ENCODE measurements at regions of chr15 and their contacts with region 1.

Region 1: DNA sequence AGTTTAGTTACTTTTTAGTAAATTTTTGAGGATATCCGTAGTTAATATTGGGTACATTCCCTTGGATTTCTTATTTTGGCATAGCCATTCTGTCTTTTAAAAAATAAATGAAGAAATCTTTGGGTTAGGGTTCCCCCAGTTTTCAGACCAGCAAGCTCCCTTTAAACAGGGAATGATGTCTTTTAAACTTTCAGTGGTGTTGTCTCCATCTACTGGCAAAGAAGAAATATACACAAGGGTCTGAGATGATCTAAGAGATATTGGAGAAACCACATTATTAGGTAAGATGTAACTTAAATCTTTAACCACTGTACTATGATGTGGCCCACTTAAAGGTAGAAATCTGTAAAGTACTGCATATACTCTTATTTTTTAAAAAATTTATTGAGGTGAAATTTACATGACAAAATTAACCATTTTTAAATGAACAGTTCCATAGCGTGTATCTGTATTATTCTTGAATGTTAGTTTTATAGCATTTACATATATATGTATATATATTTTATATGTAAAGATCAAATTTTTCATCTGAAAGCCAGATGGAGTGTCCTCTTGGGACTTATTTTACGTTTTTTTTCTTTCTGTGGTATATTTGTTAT is 35.1 kb upstream of the EIF3J start:
- DNase-seq: peak; percentile 32
- H3K4me3 ChIP-seq: no peak overlapping the region
- H3K27ac ChIP-seq: no peak overlapping the region
- H3K4me1 ChIP-seq: no peaks in the 10 kb centered on the region
- H3K27me3 ChIP-seq: no peaks in the 10 kb centered on the region
- CTCF ChIP-seq: peak; percentile 54 to 63

Region 2: DNA sequence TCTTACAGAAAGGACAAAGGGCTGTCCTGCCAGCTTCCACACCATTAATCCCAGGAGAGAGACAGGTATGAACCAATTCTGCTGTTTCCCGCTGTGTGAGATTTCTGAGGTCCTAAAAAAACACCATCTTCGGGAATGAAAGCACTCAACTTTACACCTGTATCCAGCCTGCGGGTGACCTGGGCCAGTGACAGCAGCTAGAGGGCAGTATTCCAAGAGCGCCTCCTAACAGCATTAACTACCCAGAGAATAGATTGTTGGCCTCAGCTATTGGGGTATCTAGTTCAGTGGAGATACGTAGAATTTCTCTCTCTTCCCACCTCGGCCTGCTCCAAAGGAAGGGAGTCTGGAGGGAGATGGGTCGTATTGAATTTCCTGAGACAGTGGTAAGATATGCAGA is 619.9 kb before region 1 on chr15:
- CTCF ChIA-PET with region 1: no interaction called
- dilution Hi-C with region 1: no loop called
- in situ Hi-C with region 1: loop called in 1 of 2 experiments (anchors 25 kb)
- intact Hi-C with region 1: no loop called
- DNase-seq: no peak
- H3K4me3 ChIP-seq: no peak overlapping the region
- H3K27ac ChIP-seq: no peak overlapping the region
- H3K4me1 ChIP-seq: no peaks in the 10 kb centered on the region
- H3K27me3 ChIP-seq: no peaks in the 10 kb centered on the region
- CTCF ChIP-seq: peak; percentile 30 to 55

Region 3: GRCh38 chr15:44137750-44138149 is 364.1 kb before region 1 on chr15:
- CTCF ChIA-PET with region 1: no interaction called
- dilution Hi-C with region 1: no loop called
- in situ Hi-C with region 1: no loop called
- intact Hi-C with region 1: loop called (anchors 10 kb)
- DNase-seq: peak; percentile 19
- H3K4me3 ChIP-seq: no peak overlapping the region
- H3K27ac ChIP-seq: no peak overlapping the region
- H3K4me1 ChIP-seq: peaks cover 10% of the 10 kb centered on the region
- H3K27me3 ChIP-seq: no peaks in the 10 kb centered on the region
- CTCF ChIP-seq: no peak

Region 4: DNA sequence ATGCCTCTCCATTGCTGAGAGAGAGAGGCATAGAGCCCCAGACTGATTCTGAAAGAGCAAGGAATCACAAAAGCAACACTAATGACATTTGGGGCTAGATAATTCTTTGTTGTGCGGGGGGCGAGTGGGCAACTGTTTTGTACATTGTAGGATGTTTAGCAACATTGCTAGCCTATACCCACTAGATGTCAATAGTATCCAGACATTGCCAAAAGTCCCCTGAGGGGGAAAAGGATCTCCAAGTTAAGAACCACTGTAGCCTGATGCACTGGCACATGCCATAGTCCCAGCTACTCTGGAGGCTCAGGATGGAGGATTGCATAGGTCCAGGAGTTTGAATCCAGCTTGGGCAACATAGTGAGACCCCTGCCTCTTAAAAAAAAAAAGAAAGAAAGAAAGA is 236.1 kb before region 1 on chr15:
- CTCF ChIA-PET with region 1: no interaction called
- dilution Hi-C with region 1: no loop called
- in situ Hi-C with region 1: no loop called
- intact Hi-C with region 1: loop called (anchors 1 kb)
- DNase-seq: no peak
- H3K4me3 ChIP-seq: no peak overlapping the region
- H3K27ac ChIP-seq: no peak overlapping the region
- H3K4me1 ChIP-seq: no peaks in the 10 kb centered on the region
- H3K27me3 ChIP-seq: no peaks in the 10 kb centered on the region
- CTCF ChIP-seq: peak in 1 of 2 donors; percentile 12

Region 5: GRCh38 chr15:44286814-44287452 is 214.9 kb before region 1 on chr15:
- CTCF ChIA-PET with region 1: no interaction called
- dilution Hi-C with region 1: no loop called
- in situ Hi-C with region 1: no loop called
- intact Hi-C with region 1: loop called (anchors 1 kb)
- DNase-seq: peak; percentile 9
- H3K4me3 ChIP-seq: peak overlapping the region in 2 of 3 experiments; percentile 81 to 90
- H3K27ac ChIP-seq: peak overlapping the region; percentile 97
- H3K4me1 ChIP-seq: peaks cover 4% of the 10 kb centered on the region
- H3K27me3 ChIP-seq: no peaks in the 10 kb centered on the region
- CTCF ChIP-seq: peak; percentile 4 to 17

Region 6: GRCh38 chr15:44426975-44427755 is 74.7 kb before region 1 on chr15 and contains the start of gene CTDSPL2:
- CTCF ChIA-PET with region 1: interaction called, 3 read pairs
- dilution Hi-C with region 1: loop called (anchors 10 kb)
- in situ Hi-C with region 1: no loop called
- intact Hi-C with region 1: loop called (anchors 1 kb)
- DNase-seq: peak; percentile 98
- H3K4me3 ChIP-seq: peak within 1 kb of the TSS; percentile 75 to 94 (median 88)
- H3K27ac ChIP-seq: peak within 1 kb of the TSS; percentile 98
- H3K4me1 ChIP-seq: no peaks in the 10 kb centered on the region
- H3K27me3 ChIP-seq: no peaks in the 10 kb centered on the region
- CTCF ChIP-seq: peak in 1 of 2 donors; percentile 44
- total RNA-seq, gene CTDSPL2: 38.0 to 47.3 TPM

Region 7: DNA sequence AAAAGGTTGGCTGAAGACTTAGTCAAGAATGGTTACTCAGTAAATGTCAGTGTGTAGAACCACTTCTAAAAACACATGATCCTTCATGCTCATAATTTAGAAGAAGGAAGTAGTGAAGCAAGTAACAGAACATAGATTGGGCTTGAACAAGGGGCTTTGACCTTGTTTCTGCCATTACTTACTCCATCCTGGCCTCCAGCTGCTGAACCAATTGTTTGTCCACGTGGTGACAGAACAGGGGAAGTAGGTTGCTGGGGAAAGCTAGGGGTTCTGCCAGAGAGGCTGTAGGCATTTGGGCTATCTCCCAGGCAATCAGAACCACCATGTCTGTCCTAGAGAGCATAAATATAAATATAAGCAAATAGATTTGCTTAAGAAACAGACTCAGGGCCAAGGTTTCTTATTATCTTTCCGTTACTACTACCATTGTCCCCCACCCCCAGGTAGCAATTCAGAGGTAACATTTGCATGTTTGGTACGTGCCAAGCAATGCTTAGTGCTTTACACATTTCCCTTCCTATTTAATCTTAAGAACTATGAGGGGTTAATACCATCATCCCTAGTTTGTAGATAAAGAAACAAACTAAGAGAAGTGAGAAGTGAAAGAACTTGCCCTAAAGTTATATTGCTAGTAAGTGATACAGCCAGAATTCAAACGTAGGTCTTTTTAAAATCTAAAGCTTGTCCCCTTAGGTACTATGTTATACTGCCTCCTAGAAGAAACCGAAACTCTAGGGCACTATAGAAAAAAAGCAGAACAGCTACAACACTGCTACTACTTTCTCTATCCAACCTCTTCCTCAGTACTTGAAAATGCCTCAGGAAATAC is 164.6 kb after region 1 on chr15:
- CTCF ChIA-PET with region 1: no interaction called
- dilution Hi-C with region 1: no loop called
- in situ Hi-C with region 1: no loop called
- intact Hi-C with region 1: no loop called
- DNase-seq: no peak
- H3K4me3 ChIP-seq: no peak overlapping the region
- H3K27ac ChIP-seq: no peak overlapping the region
- H3K4me1 ChIP-seq: peaks cover 15% of the 10 kb centered on the region
- H3K27me3 ChIP-seq: no peaks in the 10 kb centered on the region
- CTCF ChIP-seq: no peak

Measured in mammary epithelial cell (primary cell).